A673 (cell line): ENCODE measurements at regions of chr2 and their contacts with region 1.

Region 1: GRCh38 chr2:135797497-135798274 is 39.3 kb downstream of the LCT start:
- DNase-seq: peak; percentile 87
- H3K4me3 ChIP-seq: no peak overlapping the region
- H3K27ac ChIP-seq: no peak overlapping the region
- H3K4me1 ChIP-seq: no peaks in the 10 kb centered on the region
- H3K27me3 ChIP-seq: no peaks in the 10 kb centered on the region
- CTCF ChIP-seq: peak; percentile 98

Region 2: GRCh38 chr2:135456431-135456830 is 341.3 kb before region 1 on chr2:
- CTCF ChIA-PET with region 1: no interaction called
- POLR2A ChIA-PET with region 1: no interaction called
- intact Hi-C with region 1: no loop called
- DNase-seq: no peak
- H3K4me3 ChIP-seq: no peak overlapping the region
- H3K27ac ChIP-seq: no peak overlapping the region
- H3K4me1 ChIP-seq: no peaks in the 10 kb centered on the region
- H3K27me3 ChIP-seq: no peaks in the 10 kb centered on the region
- CTCF ChIP-seq: no peak

Region 3: GRCh38 chr2:135785032-135785431 is 12.7 kb before region 1 on chr2:
- CTCF ChIA-PET with region 1: no interaction called
- POLR2A ChIA-PET with region 1: interaction called, 13 read pairs
- intact Hi-C with region 1: no loop called
- DNase-seq: no peak
- H3K4me3 ChIP-seq: no peak overlapping the region
- H3K27ac ChIP-seq: no peak overlapping the region
- H3K4me1 ChIP-seq: no peaks in the 10 kb centered on the region
- H3K27me3 ChIP-seq: no peaks in the 10 kb centered on the region
- CTCF ChIP-seq: peak; percentile 37

Region 4: DNA sequence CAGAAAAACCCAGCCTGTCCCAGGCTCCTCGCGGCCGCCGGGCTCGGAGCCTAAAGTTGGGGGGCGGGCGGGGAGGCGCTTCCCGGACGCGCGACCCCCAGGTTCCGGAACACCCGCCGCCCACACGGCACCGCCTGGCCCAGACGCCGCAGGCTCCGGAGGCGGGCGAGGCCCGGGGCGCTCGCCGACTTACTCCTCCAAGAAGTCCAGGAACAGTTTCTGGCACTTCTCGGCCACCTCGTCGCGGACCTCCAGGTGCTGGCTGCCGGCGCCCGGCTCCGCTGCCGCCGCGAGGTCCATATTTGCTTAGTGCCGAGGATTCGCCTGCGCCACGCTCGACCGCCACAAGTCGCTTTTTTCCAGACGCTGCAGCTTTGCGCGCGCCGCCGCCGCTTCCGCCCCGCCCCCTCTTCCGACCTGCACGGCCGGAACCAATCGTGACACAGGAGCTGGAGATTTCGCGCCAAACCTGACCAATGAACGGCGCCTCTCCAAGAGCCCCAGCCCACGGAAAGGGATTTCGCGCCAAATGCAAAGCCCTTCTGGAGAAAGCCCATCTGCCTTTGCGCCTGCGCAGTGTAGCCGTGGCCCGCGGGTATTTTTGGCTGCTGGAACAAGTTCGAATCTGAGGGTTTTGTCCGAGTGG is 78.5 kb after region 1 on chr2 and contains the start of gene MCM6:
- CTCF ChIA-PET with region 1: no interaction called
- POLR2A ChIA-PET with region 1: no interaction called
- intact Hi-C with region 1: no loop called
- DNase-seq: peak; percentile 99
- H3K4me3 ChIP-seq: peak within 1 kb of the TSS; percentile 89
- H3K27ac ChIP-seq: peak within 1 kb of the TSS; percentile 94
- H3K4me1 ChIP-seq: peaks cover 18% of the 10 kb centered on the region
- H3K27me3 ChIP-seq: no peaks in the 10 kb centered on the region
- CTCF ChIP-seq: no peak
- total RNA-seq, gene MCM6: 101 and 111 TPM in 2 replicates